A549 (cell line): ENCODE measurements at regions of chr7 and their contacts with region 1.

Region 1: DNA sequence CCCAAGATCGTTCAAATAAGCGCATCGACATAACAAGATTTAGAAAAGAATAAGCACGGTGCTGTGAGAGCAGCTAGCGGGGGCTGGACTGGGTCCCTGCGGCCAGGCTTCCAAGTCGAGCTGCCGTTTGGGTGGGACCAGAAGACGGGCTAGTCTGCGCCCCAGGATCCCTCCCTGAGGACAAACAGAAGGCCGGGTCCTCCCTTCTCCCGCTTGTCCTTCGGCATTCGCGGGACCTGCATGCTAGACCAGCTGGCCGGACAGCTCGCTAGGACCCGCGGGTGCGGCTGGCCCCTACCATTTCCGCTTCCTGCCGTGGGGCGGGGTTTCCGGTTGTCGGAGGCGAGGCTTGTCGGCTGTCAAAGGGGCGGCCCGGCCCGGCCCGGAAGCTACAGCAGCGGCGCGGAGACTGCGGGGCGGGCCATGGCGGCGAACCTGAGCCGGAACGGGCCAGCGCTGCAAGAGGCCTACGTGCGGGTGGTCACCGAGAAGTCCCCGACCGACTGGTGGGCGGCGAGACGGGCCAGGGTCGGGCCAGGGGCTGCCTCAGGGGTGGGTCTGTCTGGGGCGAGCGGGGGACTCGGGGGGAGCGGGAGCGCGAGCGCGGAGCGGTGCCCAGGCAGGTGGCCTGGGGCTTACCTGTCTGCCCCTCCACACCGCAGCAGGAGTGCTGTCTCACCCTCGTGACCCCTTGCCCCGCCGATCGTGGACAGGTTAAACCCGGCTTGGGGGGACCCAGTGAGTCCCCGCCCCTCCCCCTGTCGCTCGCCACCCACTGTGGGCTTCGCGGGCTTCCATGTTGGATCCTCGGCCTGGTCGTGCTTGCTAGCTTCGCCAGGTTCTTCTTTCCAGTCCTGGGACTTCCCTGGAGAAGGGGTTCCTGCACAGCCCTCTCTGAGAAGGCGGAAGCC is at the start of gene DBNL:
- DNase-seq: peak; percentile 89 to 95
- ATAC-seq: peak; percentile 91 to 97
- H3K4me3 ChIP-seq: peak within 1 kb of the TSS; percentile 89
- H3K27ac ChIP-seq: peak within 1 kb of the TSS; percentile 87 to 96
- H3K4me1 ChIP-seq: peaks cover 5% of the 10 kb centered on the region; the same call in 1 of the 3 replicates
- CTCF ChIP-seq: no peak
- EP300 ChIP-seq: no peak
- POLR2A ChIP-seq: peak; percentile 97
- RAD21 ChIP-seq: no peak
- polyA plus RNA-seq, gene DBNL: 41.8 and 41.9 TPM in 2 replicates

Region 2: DNA sequence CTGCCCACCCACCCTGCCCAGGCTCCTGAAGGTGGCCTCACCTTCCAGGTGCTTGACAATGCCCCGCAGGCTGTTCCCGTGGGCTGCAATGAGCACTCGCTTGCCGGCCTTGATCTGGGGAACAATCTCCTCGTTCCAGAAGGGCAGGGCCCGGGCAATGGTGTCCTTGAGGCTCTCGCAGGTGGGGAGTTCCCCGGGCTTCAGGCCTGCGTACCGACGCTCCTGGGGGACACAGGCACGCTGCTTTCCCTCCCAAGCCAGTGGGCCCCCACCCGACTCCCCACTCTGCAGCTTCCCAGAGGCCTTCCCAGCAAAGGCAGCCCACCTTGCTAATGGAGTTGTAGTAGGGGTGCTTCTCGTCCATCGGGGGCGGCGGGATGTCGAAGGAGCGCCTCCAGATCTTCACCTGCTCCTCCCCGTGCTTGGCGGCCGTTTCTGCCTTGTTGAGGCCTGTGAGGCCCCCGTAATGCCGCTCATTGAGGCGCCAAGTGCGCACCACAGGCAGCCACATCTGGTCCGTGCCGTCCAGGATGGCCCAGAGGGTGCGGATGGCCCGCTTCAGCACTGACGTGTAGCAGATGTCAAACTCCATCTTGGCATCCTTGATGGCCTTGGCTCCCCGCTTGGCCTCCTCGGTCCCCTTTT is 20.3 kb after region 1 on chr7:
- CTCF ChIA-PET with region 1: interaction called, 4 read pairs
- POLR2A ChIA-PET with region 1: interaction called, 12 read pairs
- DNase-seq: no peak
- ATAC-seq: peak in 1 of 2 experiments; percentile 6; a peak in 2 of 6 replicates
- H3K4me3 ChIP-seq: no peak overlapping the region
- H3K27ac ChIP-seq: no peak overlapping the region
- H3K4me1 ChIP-seq: no peaks in the 10 kb centered on the region
- CTCF ChIP-seq: no peak
- EP300 ChIP-seq: no peak
- POLR2A ChIP-seq: 0 out of 2 replicates have a peak, but pooled peaks have one; percentile 7
- RAD21 ChIP-seq: no peak